GM12878 (cell line): ENCODE measurements at regions of chr5 and their contacts with region 1.

Region 1: DNA sequence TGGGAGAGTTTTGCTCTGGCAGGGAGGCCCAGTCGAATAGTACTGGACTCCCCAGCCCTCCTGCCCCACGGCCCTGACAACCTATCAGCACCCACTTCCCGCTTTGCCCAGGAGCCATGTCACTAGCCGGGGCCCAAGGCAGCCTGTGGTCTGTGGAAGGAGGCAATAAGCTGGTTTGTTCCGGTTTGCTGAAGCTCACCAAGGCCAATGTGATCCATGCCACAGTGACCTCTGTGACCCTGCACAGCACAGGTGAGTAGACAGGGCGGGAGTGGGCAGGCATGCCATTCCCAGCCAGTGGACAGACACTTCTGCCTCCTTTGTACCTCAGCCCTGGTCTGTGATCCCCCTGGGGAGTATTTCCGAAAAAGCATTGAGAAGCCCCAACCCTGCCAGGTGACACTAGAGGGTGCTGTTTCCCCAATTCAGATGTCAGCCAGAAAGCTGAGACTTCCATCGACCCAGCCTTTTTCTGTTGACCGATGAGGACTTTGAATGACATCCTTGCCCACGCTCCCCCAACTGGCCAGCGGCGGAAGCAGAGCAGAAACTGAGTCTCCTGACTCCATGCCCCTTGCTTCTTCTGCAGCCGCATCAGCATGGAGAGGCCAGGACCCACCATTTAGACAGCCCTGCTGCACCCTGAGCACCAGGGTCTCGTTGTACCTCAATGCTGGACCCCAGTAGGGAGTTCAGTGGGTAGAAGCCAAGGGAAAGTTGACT is 9.6 kb downstream of the PCYOX1L start:
- DNase-seq: no peak
- ATAC-seq: peak; percentile 93
- H3K4me3 ChIP-seq: no peak overlapping the region
- H3K27ac ChIP-seq: no peak overlapping the region
- H3K4me1 ChIP-seq: no peaks in the 10 kb centered on the region
- H3K27me3 ChIP-seq: no peaks in the 10 kb centered on the region
- CTCF ChIP-seq: peak; percentile 83 to 84 (median 83)
- EP300 ChIP-seq: no peak
- POLR2A ChIP-seq: no peak
- RAD21 ChIP-seq: peak; percentile 59

Region 2: GRCh38 chr5:149325166-149325735 is 42.2 kb before region 1 on chr5:
- CTCF ChIA-PET with region 1: interaction called, 118 read pairs
- POLR2A ChIA-PET with region 1: no interaction called
- RAD21 ChIA-PET with region 1: interaction called, 6 read pairs
- SMC1A ChIA-PET with region 1: interaction called, 10 read pairs
- in situ Hi-C with region 1: no loop called
- intact Hi-C with region 1: no loop called
- DNase-seq: no peak
- ATAC-seq: no peak
- H3K4me3 ChIP-seq: no peak overlapping the region
- H3K27ac ChIP-seq: no peak overlapping the region
- H3K4me1 ChIP-seq: no peaks in the 10 kb centered on the region
- H3K27me3 ChIP-seq: no peaks in the 10 kb centered on the region
- CTCF ChIP-seq: no peak
- EP300 ChIP-seq: no peak
- POLR2A ChIP-seq: no peak
- RAD21 ChIP-seq: no peak

Region 3: DNA sequence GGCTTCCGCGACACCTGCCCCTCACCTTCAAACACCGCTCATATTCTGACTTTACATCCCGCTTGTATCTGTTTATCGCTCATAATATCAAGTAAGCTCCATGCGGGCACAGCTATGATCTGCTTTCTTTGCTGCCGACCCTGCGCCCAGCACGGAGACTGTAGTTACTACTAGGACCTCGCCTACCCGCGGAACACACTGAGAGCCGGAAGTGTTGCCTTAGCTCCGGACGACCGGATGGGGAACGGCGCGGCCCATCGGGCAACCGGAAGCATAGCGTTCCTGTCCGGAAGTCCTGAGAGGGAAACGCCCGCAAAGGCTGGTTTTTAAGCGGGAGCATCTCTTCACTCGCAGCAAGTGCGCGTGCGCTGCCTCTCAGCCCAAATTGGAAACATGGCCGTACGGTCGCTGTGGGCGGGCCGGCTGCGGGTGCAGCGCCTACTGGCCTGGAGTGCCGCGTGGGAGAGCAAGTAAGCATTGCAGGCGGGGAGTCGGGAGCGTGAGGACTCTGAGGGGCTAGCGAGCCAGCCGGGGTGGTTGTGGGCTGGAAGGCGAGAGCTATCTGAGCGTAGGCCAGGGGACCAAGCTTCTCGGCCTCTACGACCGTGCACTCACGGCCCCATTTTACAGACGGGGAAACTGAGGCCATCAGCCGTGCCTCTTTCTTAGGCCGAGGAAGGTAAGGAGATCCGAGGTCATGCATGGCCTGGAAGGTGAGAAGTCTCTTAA is 22.1 kb before region 1 on chr5 and contains the start of gene GRPEL2:
- CTCF ChIA-PET with region 1: interaction called, 62 read pairs
- POLR2A ChIA-PET with region 1: no interaction called
- RAD21 ChIA-PET with region 1: interaction called, 6 read pairs
- SMC1A ChIA-PET with region 1: interaction called, 18 read pairs
- in situ Hi-C with region 1: no loop called
- intact Hi-C with region 1: no loop called
- DNase-seq: peak; percentile 87
- ATAC-seq: peak; percentile 96
- H3K4me3 ChIP-seq: peak within 1 kb of the TSS; percentile 97
- H3K27ac ChIP-seq: peak within 1 kb of the TSS; percentile 84
- H3K4me1 ChIP-seq: no peaks in the 10 kb centered on the region
- H3K27me3 ChIP-seq: no peaks in the 10 kb centered on the region
- CTCF ChIP-seq: 0 out of 6 replicates have a peak, but pooled peaks of 1 of the 3 experiments have one; percentile 6
- EP300 ChIP-seq: no peak
- POLR2A ChIP-seq: peak; percentile 97
- RAD21 ChIP-seq: no peak
- polyA plus RNA-seq, gene GRPEL2: 4.4 to 7.6 TPM

Region 4: DNA sequence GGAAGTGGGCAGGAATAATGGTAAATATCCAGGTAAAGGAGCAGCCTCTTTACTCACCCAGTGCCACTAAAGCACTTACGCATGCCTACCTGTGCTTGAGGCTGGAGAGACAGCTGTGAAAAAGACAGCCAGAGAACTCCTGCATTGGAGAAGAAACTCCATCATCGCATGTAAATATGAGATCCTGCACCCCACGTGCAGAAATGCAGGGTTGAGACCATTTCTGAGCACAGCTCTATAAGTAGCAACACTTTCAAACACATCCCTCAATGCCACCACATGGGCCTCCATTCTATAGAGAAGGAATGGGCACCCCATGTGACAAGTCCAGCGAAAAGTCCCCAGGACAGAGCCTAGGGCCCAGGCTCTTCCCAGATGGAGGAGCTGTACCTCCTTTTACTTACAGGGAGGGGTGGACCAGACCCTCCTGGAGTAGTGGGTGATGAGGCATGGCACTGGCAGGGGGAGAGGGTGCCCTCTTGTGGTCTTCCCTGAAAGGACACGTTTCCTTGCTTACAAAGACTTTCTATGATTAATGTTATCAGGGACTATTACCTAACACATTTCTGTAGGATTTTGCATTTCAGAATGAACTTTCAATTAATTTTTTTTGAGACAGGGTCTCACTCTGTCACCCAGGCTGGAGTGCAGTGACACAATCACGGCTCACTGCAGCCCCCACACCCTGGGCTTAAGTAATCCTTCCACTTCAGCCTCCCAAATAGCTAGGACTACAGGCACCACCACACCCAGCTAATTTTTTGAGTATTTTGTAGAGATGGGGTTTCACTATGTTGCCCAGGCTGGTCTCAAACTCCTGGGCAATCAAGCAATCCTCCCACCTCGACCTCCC is 67.0 kb after region 1 on chr5:
- CTCF ChIA-PET with region 1: interaction called, 25 read pairs
- POLR2A ChIA-PET with region 1: no interaction called
- RAD21 ChIA-PET with region 1: interaction called, 8 read pairs
- SMC1A ChIA-PET with region 1: interaction called, 25 read pairs
- in situ Hi-C with region 1: no loop called
- intact Hi-C with region 1: no loop called
- DNase-seq: no peak
- ATAC-seq: peak; percentile 75
- H3K4me3 ChIP-seq: no peak overlapping the region
- H3K27ac ChIP-seq: no peak overlapping the region
- H3K4me1 ChIP-seq: no peaks in the 10 kb centered on the region
- H3K27me3 ChIP-seq: peaks cover 0 to 5% of the 10 kb centered on the region in 2 experiments; a peak in 3 of 4 replicates
- CTCF ChIP-seq: peak; percentile 71 to 84 (median 75)
- EP300 ChIP-seq: no peak
- POLR2A ChIP-seq: no peak
- RAD21 ChIP-seq: peak; percentile 52

Region 5: DNA sequence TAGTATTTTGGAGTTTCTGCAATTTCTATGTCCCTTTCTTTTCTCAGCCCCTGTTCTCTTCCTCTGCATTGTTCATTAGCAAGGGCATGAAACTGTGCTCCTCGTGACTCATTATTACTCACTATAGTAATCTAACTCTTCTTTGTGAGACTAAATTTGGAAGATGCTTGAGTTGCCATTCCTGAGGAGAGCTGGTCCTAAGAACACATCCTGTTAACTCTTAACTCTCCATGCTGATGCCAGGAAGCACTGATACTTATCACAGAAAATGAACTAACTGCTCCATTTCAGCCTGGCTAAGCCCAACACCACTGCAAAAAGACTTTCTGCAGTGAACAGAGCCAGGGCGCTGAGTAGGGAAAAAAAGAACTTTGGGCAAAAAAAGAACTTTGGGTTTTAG is 194.4 kb after region 1 on chr5:
- CTCF ChIA-PET with region 1: interaction called, 17 read pairs
- POLR2A ChIA-PET with region 1: no interaction called
- RAD21 ChIA-PET with region 1: interaction called, 4 read pairs
- SMC1A ChIA-PET with region 1: interaction called, 5 read pairs
- in situ Hi-C with region 1: no loop called
- intact Hi-C with region 1: loop called (anchors 2 kb)
- DNase-seq: no peak
- ATAC-seq: no peak
- H3K4me3 ChIP-seq: no peak overlapping the region
- H3K27ac ChIP-seq: no peak overlapping the region
- H3K4me1 ChIP-seq: no peaks in the 10 kb centered on the region
- H3K27me3 ChIP-seq: no peaks in the 10 kb centered on the region
- CTCF ChIP-seq: no peak
- EP300 ChIP-seq: no peak
- POLR2A ChIP-seq: no peak
- RAD21 ChIP-seq: no peak

Region 6: DNA sequence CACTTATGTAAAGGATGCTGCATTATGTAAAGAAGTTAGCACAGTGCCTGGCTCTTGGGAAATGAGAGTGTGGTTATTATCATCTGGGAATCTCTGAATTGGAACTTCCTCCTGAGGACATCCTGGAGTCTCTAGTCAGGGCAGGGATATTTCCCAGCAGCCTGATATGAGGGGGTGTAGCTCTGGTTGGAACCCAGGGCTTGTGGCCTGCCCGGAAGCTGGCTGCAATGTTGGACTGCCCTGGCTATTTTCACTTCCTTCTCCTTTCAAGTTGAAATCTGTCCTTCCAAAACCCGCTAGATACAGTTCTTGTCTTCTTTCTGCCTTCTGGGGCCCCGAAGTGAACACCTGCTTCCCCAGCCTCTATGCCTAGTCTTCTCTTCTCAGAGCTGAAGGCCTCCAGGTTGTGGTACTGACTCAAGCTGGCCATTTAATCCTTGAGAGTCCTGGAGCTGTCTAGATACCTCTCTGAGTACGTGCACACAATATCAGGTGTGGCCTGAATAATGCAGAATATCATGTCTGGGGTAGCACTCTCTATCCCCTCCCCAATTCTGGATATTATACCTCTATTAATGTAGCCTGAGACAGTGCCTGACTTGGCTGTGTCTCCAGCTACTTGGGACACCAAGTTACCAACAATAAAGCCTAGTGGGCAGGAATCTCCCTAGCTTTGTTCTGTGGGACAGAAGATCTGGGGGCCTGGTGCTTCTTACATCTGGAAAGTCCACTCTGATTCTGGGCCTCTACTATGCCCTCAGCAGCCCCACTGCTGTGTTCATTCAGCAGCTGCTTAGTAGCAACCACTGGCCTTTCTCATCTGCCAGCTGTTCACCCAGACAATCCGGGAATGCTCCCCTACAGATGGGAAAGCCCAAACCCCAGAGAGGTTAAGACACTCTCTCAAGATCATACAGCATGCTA is 867.4 kb after region 1 on chr5:
- CTCF ChIA-PET with region 1: no interaction called
- POLR2A ChIA-PET with region 1: no interaction called
- RAD21 ChIA-PET with region 1: no interaction called
- SMC1A ChIA-PET with region 1: no interaction called
- in situ Hi-C with region 1: no loop called
- intact Hi-C with region 1: no loop called
- DNase-seq: no peak
- ATAC-seq: peak; percentile 72
- H3K4me3 ChIP-seq: no peak overlapping the region
- H3K27ac ChIP-seq: no peak overlapping the region
- H3K4me1 ChIP-seq: no peaks in the 10 kb centered on the region
- H3K27me3 ChIP-seq: no peaks in the 10 kb centered on the region; a peak in 1 of 4 replicates
- CTCF ChIP-seq: no peak
- EP300 ChIP-seq: no peak
- POLR2A ChIP-seq: no peak
- RAD21 ChIP-seq: no peak